ENCODE measurements at regions of chr5 and their contacts with region 1.

Region 1: GRCh38 chr5:90488791-90489190 is 14.1 kb downstream of the POLR3G start:
- DNase-seq: no peak
- ATAC-seq: peak; percentile 70
- H3K4me3 ChIP-seq: no peak overlapping the region
- H3K27ac ChIP-seq: no peak overlapping the region
- H3K4me1 ChIP-seq: no peaks in the 10 kb centered on the region
- H3K27me3 ChIP-seq: no peaks in the 10 kb centered on the region
- CTCF ChIP-seq: no peak

Region 2: GRCh38 chr5:90409318-90410177 is 79.2 kb before region 1 on chr5 and contains the start of gene CETN3:
- CTCF ChIA-PET with region 1: no interaction called
- POLR2A ChIA-PET with region 1: interaction called, 17 read pairs
- in situ Hi-C with region 1: no loop called
- intact Hi-C with region 1: no loop called
- DNase-seq: peak; percentile 86
- ATAC-seq: peak; percentile 98
- H3K4me3 ChIP-seq: peak within 1 kb of the TSS; percentile 91 to 99
- H3K27ac ChIP-seq: peak within 1 kb of the TSS; percentile 98
- H3K4me1 ChIP-seq: peaks cover 30% of the 10 kb centered on the region
- H3K27me3 ChIP-seq: no peaks in the 10 kb centered on the region
- CTCF ChIP-seq: no peak
- total RNA-seq, gene CETN3: 30.6 TPM